ENCODE measurements at regions of chr17 and their contacts with region 1.

Region 1: DNA sequence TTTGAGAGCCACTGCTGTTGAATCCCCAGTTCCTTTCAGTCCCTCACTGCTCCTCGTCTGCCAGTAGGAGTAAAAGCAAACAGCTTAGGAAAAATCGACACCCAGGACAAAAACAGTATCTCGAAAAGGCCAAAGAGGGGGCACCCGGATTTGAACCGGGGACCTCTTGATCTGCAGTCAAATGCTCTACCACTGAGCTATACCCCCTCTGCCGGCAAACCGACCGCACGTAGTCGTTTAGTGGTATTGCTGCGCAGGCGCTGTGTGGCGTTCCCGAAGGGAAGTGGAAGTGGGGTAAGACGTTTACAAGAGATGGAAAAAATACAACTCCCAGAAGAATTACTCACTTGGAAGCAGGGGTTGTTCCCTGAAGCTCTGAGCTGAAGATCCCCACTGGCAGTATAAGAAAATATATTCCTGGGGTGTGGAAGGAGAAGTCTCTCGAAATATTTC is 2.2 kb upstream of the PLXDC1 start:
- DNase-seq: peak; percentile 85 to 95
- ATAC-seq: peak; percentile 82 to 90 (median 84)
- H3K4me3 ChIP-seq: peak overlapping the region; percentile 84
- H3K27ac ChIP-seq: peak overlapping the region; percentile 81
- H3K4me1 ChIP-seq: peaks cover 6% of the 10 kb centered on the region
- H3K27me3 ChIP-seq: peaks cover 0 to 21% (median 6%) of the 10 kb centered on the region in 3 donors
- CTCF ChIP-seq: peak; percentile 5

Region 2: DNA sequence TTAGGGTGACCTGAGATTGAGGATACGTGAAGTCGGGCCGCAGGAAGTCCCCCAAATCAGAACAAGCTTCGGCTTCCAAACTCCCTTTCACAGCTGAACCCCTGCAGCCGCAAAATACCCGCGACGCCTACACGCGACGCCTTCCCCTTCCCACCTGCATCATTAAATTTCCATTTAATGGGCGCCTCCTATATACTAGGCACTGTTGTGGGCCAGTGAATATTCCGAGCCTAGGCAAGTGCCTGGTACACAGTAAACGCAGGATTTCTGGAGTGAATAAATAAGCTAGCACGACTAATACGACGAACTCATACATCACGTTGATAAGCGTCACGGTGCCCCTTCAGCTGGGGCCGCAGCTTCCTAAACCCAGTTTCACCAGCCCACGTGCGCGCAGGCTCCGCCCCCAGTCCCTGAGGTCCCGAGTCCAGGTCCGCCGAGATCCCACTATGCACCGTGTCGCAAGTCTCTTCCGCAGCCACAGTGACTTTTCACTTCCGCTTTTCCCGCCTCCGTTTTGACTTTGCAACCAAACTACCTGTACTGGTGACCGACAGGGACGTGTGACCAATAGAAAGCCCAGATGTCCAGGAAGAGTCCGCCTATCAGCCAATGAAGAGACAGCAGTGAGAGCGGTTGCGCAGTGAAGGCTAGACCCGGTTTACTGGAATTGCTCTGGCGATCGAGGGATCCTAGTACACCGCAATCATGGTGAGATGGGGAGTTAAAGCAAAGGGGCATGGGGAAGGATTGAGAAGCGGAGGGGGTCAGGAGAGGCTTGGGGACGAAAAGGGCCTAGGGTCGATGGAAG is 401.3 kb before region 1 on chr17 and contains the start of gene PSMB3:
- intact Hi-C with region 1: loop called in 1 of 2 experiments (anchors 5 kb)
- DNase-seq: peak; percentile 96 to 98
- ATAC-seq: peak; percentile 90 to 94 (median 92)
- H3K4me3 ChIP-seq: peak within 1 kb of the TSS; percentile 79
- H3K27ac ChIP-seq: peak within 1 kb of the TSS; percentile 92
- H3K4me1 ChIP-seq: peaks cover 32% of the 10 kb centered on the region
- H3K27me3 ChIP-seq: peaks cover 0 to 42% (median 8%) of the 10 kb centered on the region in 3 donors
- CTCF ChIP-seq: no peak
- total RNA-seq, gene PSMB3: 112 to 209 (median 184) TPM

Region 3: DNA sequence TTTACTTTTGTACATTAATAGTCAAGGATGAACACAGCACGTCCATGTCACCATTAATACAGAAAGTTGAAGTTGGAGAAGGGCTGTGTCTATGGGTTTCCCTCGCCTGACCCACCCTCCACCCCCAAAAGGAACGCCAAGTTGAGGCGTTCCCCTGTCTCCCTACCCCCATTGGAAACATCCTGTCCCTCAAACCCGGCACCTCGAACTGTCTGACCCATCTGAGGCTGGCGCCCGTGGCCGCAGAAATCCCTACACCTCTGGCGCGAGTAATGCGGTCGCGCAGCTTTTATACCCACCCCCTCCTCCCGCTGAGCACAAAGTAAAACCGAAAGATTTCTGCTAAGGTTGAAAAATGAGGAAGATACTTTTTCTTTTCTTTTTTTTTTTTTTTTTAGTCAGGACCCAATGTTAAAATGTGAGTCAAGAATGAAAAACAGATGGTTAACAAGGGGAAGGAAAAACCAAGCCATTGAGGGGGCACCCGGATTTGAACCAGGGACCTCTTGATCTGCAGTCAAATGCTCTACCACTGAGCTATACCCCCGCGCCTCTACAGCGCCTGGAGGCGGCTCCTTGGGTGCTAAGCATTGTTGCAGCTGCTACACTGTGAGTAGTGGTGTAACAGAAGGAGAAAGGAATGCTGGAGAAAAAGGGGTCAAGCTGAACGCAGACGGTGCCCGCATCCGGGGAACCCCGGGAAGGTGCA is 284.7 kb before region 1 on chr17:
- intact Hi-C with region 1: loop called (anchors 5 to 10 kb)
- DNase-seq: peak; percentile 85 to 93
- ATAC-seq: peak; percentile 81 to 86 (median 82)
- H3K4me3 ChIP-seq: peak overlapping the region; percentile 93
- H3K27ac ChIP-seq: peak overlapping the region; percentile 85
- H3K4me1 ChIP-seq: peaks cover 25% of the 10 kb centered on the region
- H3K27me3 ChIP-seq: no peaks in the 10 kb centered on the region
- CTCF ChIP-seq: peak; percentile 10

Region 4: DNA sequence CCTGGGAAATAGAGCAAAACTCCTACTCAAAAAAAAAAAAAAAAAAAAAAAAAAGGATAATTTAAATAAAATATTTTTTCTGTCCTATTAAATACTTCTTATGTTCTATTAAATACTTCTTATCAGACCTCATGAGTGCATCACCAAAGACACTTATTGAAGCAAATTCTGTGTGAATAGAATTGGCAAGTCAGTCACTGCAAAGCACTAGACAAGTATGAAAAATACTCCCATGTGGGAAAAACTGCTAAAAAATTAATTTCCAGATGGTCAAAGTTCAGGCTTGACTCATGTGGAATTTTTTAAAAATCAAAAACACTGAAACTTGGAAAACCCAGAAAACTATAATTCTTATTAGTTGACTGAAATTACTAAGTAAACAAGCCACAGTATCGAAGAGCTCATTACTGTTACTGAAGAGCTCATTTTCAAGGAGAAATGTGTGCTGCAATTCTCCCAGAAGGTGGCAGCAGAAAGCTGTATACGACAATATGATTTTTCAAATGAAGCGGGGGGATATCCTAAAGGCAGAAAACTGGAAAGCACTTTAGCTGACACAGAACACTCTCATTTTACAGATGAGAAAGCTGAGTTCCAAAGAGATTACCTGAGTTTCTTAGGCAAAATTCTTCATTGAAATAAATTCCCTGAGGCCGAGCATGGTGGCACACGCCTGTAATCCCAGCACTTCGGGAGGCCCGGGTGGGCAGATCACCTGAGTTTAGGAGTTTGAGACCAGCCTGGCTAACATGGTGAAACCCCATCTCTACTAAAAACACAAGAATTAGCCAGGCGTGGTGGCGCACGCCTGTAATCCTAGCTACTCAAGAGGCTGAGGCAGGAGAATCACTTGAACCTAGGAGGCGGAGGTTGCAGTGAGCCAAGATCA is 170.5 kb before region 1 on chr17:
- intact Hi-C with region 1: loop called (anchors 1 to 2 kb)
- DNase-seq: no peak
- ATAC-seq: peak in 3 of 4 donors; percentile 57 to 79 (median 68)
- H3K4me3 ChIP-seq: no peak overlapping the region
- H3K27ac ChIP-seq: no peak overlapping the region
- H3K4me1 ChIP-seq: no peaks in the 10 kb centered on the region
- H3K27me3 ChIP-seq: no peaks in the 10 kb centered on the region
- CTCF ChIP-seq: peak; percentile 76

Region 5: GRCh38 chr17:39069114-39069756 is 84.4 kb before region 1 on chr17:
- intact Hi-C with region 1: loop called (anchors 2 to 5 kb)
- DNase-seq: no peak
- ATAC-seq: peak; percentile 56 to 79 (median 65)
- H3K4me3 ChIP-seq: no peak overlapping the region
- H3K27ac ChIP-seq: no peak overlapping the region
- H3K4me1 ChIP-seq: no peaks in the 10 kb centered on the region
- H3K27me3 ChIP-seq: no peaks in the 10 kb centered on the region
- CTCF ChIP-seq: peak; percentile 44

Region 6: DNA sequence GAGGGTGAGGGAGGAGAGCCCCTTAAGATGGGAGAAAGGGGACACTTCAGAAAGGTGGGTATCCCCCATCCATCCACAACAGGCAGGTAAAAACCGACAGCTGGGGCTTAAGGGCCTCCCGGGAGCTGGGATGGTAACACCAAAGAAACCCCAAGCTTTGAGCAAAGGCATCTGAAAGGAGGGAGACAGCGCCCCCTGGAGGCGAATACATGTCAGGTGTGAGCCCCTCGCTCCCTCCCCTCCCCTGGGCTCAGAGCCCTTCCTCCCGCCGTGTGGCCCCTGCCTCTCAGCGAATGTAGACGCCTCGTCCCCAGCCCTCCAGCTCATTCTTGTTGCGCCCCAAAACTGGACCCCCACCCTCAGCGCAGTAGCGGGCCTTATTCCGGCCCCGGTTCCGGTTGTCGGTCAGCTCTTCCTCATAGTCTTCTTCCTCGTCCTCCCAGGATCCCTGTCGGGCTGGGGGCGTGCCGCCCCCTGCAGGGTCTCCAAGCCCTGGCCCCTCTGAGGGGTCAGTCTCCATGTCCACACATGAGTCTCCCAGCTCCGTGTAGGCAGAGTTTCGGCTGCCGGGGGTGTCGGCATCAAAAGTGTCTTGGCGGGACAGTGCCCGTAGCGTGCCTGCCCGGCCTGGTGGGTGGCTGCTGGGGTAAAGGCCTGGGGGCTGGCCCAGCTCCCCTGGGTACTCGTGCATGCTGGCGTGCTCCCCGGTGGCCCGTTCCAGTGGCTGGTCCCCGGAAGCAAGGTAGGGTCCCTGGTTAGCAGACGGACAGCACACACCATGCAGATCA is 21.5 kb after region 1 on chr17:
- intact Hi-C with region 1: no loop called
- DNase-seq: peak; percentile 84 to 90
- ATAC-seq: peak; percentile 55 to 75 (median 63)
- H3K4me3 ChIP-seq: no peak overlapping the region
- H3K27ac ChIP-seq: peak overlapping the region; percentile 81
- H3K4me1 ChIP-seq: peaks cover 37% of the 10 kb centered on the region
- H3K27me3 ChIP-seq: no peaks in the 10 kb centered on the region
- CTCF ChIP-seq: peak; percentile 87

Region 7: DNA sequence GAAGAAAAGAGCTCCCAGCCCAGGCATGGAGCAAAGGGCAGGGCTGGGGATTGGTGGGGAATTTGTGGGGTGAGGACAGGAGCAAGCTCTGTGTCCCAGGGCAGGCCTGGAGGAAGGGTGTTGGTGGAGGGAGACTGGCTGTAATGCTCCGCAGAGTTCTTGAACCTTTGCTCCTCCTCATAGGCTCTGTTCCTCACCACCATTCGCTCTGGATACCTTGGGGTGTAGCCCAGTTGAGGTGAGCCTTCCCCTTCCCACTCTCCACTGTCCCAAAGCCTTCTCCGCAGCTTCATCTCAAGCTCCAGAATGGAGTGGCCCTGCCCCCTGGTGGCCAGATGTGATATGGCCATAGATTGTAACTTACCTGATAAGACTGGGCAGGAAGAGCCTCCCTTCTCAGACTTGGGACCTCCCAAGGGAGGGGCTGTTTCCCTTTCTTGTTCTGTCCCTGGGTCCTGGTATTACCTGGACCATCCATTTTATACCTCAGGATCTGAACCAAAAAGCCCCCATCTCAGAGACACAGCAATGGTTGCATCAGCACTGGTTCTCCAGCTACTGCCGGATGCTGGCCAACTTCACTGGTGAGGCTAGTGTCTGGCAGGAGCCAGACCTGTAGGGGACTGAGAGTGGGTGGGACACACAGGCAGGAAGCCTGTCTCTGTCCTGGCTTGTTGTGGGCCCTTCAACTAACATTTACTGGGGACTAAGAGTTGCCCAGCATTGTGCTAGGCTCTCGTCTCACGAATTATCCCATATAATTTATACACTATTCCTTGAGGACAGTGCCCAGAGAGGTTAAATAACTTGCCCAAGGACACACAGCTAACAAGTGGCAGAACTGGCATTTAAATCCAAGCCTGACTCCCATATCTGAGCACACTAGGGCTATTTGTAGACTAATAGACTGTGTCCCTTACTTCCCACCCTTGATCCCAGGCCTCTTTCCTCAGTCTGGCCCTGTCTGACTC is 91.3 kb after region 1 on chr17:
- intact Hi-C with region 1: no loop called
- DNase-seq: peak; percentile 84 to 90
- ATAC-seq: peak; percentile 87 to 95 (median 94)
- H3K4me3 ChIP-seq: no peak overlapping the region
- H3K27ac ChIP-seq: no peak overlapping the region
- H3K4me1 ChIP-seq: peaks cover 4% of the 10 kb centered on the region
- H3K27me3 ChIP-seq: no peaks in the 10 kb centered on the region
- CTCF ChIP-seq: peak; percentile 98

Measured in psoas muscle (tissue), 8 donors.